ENCODE measurements at regions of chr7 and their contacts with region 1.

Region 1: DNA sequence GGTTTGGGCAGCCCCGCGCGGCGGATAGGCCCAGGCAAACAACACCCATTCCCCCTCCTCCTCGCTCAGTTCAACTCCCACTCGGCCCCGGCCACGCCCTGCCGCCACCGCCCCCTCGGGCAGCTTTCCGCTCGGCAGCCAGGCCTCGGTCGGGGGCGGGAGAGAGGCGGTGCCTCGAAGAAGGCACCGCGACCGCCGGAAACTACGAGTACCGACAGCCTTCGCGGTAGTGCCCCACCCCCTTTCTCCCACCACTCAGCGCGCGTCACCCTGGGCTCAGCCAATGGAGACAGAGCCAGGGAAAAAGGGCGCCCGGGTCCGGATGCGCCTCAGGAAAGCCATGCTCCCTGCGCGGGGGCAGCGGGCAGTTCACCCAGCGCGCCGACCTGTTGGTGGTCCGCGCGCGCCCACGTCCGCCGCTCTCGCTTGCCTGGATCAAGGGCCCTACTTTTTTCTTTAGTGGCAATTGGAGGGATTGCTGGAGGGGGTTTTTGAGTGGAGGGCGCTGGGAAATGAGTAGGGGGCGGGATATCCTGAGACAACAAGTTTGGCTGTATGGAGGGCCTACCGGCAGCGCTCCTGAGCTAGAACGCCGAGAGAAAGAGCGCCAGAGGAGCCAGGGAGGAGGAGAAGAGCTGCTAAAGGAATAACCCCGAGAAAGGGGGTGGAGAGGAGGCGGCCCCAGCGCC is 557 bp upstream of the SP4 start:
- DNase-seq: peak; percentile 99
- ATAC-seq: peak; percentile 75
- H3K4me3 Mint-ChIP-seq: peak overlapping the region; percentile 100
- H3K27ac Mint-ChIP-seq: peak overlapping the region; percentile 100
- H3K4me1 Mint-ChIP-seq: peaks cover 49% of the 10 kb centered on the region
- H3K27me3 Mint-ChIP-seq: no peaks in the 10 kb centered on the region
- CTCF ChIP-seq: no peak

Region 2: DNA sequence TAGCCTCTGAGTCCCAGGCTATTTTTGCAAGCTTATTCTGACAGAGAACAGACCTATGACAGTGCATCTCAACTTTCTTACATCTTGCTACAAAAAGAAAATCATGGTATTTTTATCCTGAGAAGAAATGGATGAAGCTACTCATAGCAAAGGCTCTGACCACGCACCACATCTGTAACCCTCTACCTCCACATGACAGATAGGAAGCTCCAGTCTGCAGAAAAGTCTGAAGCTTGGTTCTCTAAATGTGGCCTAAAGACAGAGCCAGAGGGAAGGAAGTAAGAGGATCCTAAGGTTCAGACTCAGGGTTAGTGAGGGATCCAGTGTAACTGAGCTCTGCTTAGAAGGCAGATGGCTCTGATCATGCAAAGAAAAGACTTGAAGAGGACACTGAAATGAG is 870.2 kb before region 1 on chr7:
- CTCF ChIA-PET with region 1: no interaction called
- POLR2A ChIA-PET with region 1: no interaction called
- intact Hi-C with region 1: no loop called
- DNase-seq: no peak
- ATAC-seq: no peak
- H3K4me3 Mint-ChIP-seq: no peak overlapping the region
- H3K27ac Mint-ChIP-seq: no peak overlapping the region
- H3K4me1 Mint-ChIP-seq: no peaks in the 10 kb centered on the region
- H3K27me3 Mint-ChIP-seq: peaks cover 4% of the 10 kb centered on the region
- CTCF ChIP-seq: no peak

Region 3: DNA sequence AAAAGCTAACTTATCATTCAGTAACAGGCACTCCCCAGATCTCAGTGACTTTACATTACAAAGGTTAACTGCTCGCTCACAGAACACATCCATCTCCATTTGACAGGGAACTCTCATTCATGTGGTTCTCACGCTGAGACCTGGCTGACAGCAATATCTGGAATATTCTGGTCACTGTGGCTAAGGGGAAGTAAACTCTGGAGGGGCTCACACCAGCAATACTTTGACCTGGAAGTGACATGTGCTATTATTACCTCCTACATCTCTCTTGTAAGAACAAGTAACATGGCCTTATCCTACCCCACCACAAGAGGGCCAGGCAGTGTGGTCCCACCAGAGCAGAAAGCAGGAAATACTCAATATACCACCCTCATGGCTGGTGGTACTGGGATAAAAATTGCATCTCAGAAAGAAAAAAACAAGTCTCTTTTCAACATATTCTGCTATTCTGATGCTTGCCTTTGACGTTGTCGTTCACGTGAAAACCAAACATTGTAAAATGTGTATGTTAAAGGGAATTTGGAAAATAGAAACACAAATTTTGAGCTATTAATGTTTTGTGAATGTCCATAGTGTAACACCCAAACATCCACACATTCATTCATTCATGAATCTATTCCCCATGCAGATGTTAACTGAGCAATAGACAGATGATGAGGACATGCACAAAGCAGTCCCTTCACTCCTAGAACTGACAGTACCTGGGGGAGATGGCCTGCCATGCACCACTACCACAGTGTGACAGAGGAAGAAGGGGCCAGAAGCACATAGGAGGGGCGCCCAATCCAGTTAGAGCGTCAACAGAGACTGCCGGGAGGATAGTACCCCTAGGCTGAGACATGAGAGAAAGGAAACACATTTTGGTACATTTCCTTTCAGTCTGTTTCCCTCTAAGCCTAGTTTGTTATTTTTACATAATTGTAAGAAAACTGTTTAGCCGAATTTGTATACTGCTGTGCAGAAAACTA is 165.4 kb before region 1 on chr7:
- CTCF ChIA-PET with region 1: interaction called, 6 read pairs
- POLR2A ChIA-PET with region 1: interaction called, 11 read pairs
- intact Hi-C with region 1: loop called (anchors 1 kb)
- DNase-seq: peak; percentile 18
- ATAC-seq: peak; percentile 96
- H3K4me3 Mint-ChIP-seq: no peak overlapping the region
- H3K27ac Mint-ChIP-seq: peak overlapping the region; percentile 6
- H3K4me1 Mint-ChIP-seq: peaks cover 14% of the 10 kb centered on the region
- H3K27me3 Mint-ChIP-seq: no peaks in the 10 kb centered on the region
- CTCF ChIP-seq: no peak

Region 4: DNA sequence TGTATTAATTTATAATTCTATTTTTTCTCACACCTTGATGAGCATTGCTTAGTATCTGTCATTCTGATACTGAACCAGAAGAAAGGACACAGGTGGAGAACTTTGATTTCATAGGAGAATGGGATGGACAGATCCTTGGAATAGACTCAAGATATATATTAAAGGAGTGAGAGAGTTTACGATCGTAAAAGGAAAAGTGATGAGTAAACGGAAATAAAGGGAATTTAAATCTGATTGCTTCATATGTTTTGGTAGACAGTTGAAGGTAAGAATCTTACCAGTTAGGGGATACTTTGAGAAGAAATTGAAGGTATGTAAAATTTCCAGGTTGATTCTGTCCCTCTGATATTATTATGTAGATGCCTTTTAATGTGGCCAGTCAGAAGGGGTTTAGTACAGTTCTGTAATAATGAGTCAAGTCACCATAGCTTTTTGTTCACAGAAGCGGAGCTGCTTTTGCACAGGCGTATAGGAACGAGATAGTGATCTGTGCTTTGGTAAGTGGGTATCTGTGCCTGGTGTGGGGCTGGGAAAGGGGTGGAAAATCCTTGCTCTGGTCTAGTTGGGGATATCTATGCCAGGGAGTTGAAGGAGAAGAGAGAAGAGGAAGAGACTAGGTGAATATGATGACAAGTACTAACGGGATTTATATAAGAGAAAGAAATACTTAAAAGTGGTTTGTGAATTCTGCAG is 16.0 kb after region 1 on chr7:
- CTCF ChIA-PET with region 1: no interaction called
- POLR2A ChIA-PET with region 1: interaction called, 10 read pairs
- intact Hi-C with region 1: no loop called
- DNase-seq: no peak
- ATAC-seq: no peak
- H3K4me3 Mint-ChIP-seq: no peak overlapping the region
- H3K27ac Mint-ChIP-seq: no peak overlapping the region
- H3K4me1 Mint-ChIP-seq: peaks cover 19% of the 10 kb centered on the region
- H3K27me3 Mint-ChIP-seq: no peaks in the 10 kb centered on the region
- CTCF ChIP-seq: no peak

Region 5: GRCh38 chr7:21966271-21966670 is 538.9 kb after region 1 on chr7:
- CTCF ChIA-PET with region 1: no interaction called
- POLR2A ChIA-PET with region 1: no interaction called
- intact Hi-C with region 1: loop called (anchors 1 kb)
- DNase-seq: peak; percentile 31
- ATAC-seq: peak; percentile 97
- H3K4me3 Mint-ChIP-seq: peak overlapping the region; percentile 66
- H3K27ac Mint-ChIP-seq: peak overlapping the region; percentile 87
- H3K4me1 Mint-ChIP-seq: peaks cover 63% of the 10 kb centered on the region
- H3K27me3 Mint-ChIP-seq: no peaks in the 10 kb centered on the region
- CTCF ChIP-seq: no peak

Region 6: GRCh38 chr7:22854158-22855048 is 1427.1 kb after region 1 on chr7:
- CTCF ChIA-PET with region 1: no interaction called
- POLR2A ChIA-PET with region 1: no interaction called
- intact Hi-C with region 1: loop called (anchors 1 kb)
- DNase-seq: peak; percentile 84
- ATAC-seq: peak; percentile 81
- H3K4me3 Mint-ChIP-seq: peak overlapping the region; percentile 96
- H3K27ac Mint-ChIP-seq: peak overlapping the region; percentile 91
- H3K4me1 Mint-ChIP-seq: peaks cover 54% of the 10 kb centered on the region
- H3K27me3 Mint-ChIP-seq: no peaks in the 10 kb centered on the region
- CTCF ChIP-seq: no peak

Region 7: DNA sequence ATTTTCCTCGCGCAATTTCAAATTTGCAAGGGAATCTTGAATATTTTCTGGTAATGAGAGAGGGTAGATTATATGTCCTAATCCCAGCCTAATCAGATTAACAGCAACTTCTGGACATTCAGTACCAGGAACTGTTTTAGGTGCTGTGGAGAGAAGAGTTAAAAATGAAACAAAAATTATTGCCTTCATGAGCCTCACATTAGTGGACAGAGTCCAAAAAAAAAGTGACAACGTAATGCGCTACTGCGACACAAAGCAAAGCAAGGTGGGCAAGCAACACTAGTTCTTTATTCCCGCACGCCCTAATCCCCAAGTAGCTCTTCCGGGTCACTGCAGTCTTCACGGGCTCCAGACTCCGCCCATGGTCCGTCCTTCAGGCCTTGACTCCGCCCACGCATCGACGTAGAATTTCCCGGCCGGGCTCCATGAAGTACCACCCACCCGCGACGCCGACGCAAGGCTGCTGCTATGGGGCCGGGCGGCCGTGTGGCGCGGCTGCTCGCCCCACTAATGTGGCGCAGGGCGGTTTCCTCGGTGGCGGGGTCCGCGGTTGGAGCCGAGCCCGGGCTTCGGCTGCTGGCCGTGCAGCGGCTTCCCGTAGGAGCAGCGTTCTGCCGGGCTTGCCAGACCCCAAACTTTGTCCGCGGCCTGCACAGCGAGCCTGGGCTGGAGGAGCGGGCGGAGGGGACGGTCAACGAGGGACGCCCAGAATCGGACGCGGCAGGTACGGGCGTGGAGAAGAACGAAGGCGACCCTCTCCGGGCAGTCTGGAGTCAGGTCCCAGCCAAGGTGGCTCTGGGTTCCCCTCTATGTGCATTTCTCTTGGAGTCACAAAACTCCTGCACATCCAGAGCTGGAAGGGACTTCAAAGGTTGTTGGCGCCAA is 1871.8 kb after region 1 on chr7 and contains the start of gene MALSU1:
- CTCF ChIA-PET with region 1: no interaction called
- POLR2A ChIA-PET with region 1: no interaction called
- intact Hi-C with region 1: loop called (anchors 1 kb)
- DNase-seq: peak; percentile 95
- ATAC-seq: peak; percentile 99
- H3K4me3 Mint-ChIP-seq: peak within 1 kb of the TSS; percentile 89
- H3K27ac Mint-ChIP-seq: peak within 1 kb of the TSS; percentile 95
- H3K4me1 Mint-ChIP-seq: peaks cover 39% of the 10 kb centered on the region
- H3K27me3 Mint-ChIP-seq: peaks cover 4% of the 10 kb centered on the region
- CTCF ChIP-seq: no peak
- total RNA-seq, gene MALSU1: 42.0 and 42.6 TPM in 2 replicates

Measured in activated B cell treated with CpG ODN at 0.5 μM for 24 hours (primary cell).